Activated T-helper 1 cell treated with anti-CD3 and anti-CD28 coated beads, Interleukin-12 subunit alpha, Interleukin-12 subunit beta, Interleukin-2, Interleukin-4 antibody, amounts not matched to agents 30 ng/mL and 10 ng/mL and 1 ng/mL, durations not matched to agents 14 hours and 24 hours and 36 hours (primary cell): ENCODE measurements at regions of chr2 and their contacts with region 1.

Region 1: GRCh38 chr2:28392297-28393113 is at the start of gene FOSL2:
- DNase-seq: peak; percentile 94
- H3K4me3 Mint-ChIP-seq: peak within 1 kb of the TSS; percentile 87
- H3K27ac Mint-ChIP-seq: peak within 1 kb of the TSS; percentile 99
- H3K4me1 Mint-ChIP-seq: peaks cover 25% of the 10 kb centered on the region
- H3K27me3 Mint-ChIP-seq: no peaks in the 10 kb centered on the region
- total RNA-seq, gene FOSL2: 54.9 and 55.0 TPM in 2 replicates

Region 2: DNA sequence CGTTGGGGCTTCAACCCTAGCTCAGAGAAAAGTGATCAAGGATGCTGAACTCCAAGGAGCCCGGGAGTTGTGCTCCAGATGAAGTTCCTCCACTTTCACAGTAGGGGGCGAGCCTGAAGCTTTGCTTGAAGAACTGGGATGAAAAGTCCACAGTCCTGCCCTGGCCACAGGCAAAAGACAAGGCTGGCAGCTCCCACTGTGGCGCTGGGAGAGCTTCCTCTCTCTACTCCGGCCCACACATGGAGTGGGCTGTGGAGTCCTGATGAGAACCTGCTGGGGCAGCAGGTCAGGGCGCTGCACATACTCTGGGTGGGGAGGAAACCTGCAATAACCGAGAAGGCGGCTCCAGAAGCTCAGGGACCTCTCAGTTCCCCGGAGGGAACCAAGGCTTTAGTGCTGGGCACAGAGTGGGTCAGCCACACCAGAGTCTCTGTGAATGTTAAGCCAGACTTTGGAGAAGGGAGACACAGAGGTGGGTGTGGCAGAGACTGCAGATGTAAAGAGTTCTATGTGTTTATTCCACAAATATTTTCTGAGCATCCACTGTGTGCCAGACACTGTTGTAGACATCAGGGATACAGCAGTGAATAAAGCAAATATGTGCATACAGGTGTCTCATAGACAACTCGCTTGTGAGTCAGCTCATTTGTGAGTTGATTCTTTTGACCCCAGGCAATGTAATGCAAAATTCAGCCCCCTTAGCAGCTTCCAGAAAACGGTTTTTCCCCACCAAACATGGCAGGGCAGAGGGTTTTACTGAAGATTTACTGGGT is 668.9 kb before region 1 on chr2:
- intact Hi-C with region 1: loop called (anchors 5 kb)
- DNase-seq: no peak
- H3K4me3 Mint-ChIP-seq: no peak overlapping the region
- H3K27ac Mint-ChIP-seq: no peak overlapping the region
- H3K4me1 Mint-ChIP-seq: peaks cover 40% of the 10 kb centered on the region
- H3K27me3 Mint-ChIP-seq: peaks cover 3% of the 10 kb centered on the region

Region 3: DNA sequence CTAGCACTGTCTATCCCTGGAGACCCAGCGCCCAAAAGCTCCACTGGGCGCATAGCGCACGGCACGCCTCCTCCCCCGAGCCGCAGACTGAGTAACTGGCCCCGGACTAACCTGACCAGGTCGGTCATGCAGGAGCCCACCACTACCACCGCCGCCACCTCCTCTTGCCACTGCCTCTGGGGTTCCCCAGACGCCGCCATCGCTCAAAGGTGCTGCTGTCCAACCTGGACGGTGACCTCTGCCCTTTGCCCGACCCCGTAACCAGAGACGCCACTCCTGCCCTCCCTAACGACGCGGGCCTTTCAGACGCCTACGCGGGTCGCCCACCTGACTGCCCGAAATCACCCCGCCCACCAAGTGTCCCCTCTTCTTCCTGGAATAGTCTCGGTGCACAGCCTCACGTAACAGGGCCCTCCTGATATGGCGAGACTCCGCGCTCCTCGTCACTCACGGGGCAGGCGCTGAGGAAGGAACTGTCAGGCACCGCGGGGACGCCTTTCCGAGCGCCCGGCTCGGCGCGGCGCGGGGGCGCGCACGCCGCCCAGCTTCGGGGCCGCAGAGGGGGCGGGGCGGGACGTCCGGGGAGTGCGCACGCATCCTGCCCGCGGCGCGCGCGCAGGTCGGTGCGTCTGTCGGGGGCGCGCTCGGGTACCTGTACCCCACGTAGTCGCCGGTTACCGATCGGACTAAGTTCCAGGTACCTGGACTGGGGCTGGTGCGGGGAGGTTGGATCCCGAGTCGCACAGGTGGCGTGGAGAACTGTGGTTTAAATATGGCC is 502.2 kb before region 1 on chr2 and contains the starts of genes BABAM2 and RBKS:
- intact Hi-C with region 1: loop called (anchors 1 kb)
- DNase-seq: peak; percentile 88
- H3K4me3 Mint-ChIP-seq: peak within 1 kb of the TSS; percentile 93
- H3K27ac Mint-ChIP-seq: peak within 1 kb of the TSS; percentile 99
- H3K4me1 Mint-ChIP-seq: peaks cover 62% of the 10 kb centered on the region
- H3K27me3 Mint-ChIP-seq: no peaks in the 10 kb centered on the region
- total RNA-seq, gene BABAM2: 46.3 and 46.6 TPM in 2 replicates
- total RNA-seq, gene RBKS: 0.76 and 0.83 TPM in 2 replicates

Region 4: GRCh38 chr2:28206762-28207161 is 185.7 kb before region 1 on chr2:
- intact Hi-C with region 1: no loop called
- DNase-seq: no peak
- H3K4me3 Mint-ChIP-seq: no peak overlapping the region
- H3K27ac Mint-ChIP-seq: no peak overlapping the region
- H3K4me1 Mint-ChIP-seq: peaks cover 5% of the 10 kb centered on the region
- H3K27me3 Mint-ChIP-seq: peaks cover 2% of the 10 kb centered on the region

Region 5: DNA sequence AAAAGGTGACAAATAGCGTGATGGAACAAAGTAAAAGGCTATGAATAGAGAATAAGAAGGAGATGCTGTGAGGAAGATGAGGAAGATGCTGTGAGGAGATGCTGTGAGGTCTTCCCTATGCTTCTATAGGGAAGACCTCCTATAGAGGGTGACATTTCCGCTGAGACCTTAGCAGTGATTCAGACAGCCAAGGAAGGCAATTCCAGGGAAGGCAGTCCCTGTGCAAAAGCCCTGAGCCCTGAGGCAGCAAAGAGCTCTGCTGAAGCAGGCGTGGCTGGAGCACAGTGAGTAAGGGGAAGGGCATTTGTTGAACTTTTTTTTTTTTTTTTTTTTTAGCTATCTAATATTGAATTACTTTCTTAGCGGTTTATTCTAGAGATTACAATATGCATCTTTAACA is 142.5 kb before region 1 on chr2:
- intact Hi-C with region 1: loop called (anchors 1 kb)
- DNase-seq: no peak
- H3K4me3 Mint-ChIP-seq: no peak overlapping the region
- H3K27ac Mint-ChIP-seq: no peak overlapping the region
- H3K4me1 Mint-ChIP-seq: peaks cover 64% of the 10 kb centered on the region
- H3K27me3 Mint-ChIP-seq: no peaks in the 10 kb centered on the region

Region 6: DNA sequence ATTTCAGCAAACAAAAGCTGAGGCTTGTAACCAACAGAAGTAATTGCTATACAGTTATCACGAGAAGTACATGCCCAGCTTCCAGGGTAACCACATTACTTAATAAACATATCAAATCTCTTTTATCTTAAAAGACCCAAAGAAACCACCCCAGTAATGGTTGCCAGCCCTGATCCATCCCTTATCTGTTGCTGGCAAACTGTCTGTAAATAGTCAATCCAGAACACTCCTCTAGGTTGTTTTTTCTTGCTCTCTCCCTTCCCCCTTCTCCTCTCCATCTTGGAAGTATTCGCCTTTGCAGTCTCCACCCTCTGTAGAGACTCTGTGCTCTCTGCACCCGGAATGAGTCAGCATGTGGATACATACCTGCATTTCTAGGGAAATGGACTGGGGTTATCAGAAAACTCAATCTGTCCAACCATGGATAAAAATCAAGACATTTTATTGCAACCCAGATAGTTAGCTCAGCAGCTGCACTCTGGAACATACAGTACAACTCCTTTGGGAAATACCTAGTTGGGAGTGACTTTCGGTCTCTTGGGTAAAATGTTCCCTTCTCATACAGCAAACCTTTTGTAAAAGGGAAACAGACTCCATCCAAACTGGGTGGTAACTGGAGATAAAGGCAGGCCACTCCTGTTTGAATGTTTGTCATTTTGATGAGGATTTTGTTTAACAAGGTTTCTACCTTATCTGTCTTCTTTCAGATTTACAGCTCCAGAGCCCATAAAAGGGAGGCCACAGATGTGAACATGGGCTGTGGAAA is 123.3 kb before region 1 on chr2:
- intact Hi-C with region 1: no loop called
- DNase-seq: no peak
- H3K4me3 Mint-ChIP-seq: no peak overlapping the region
- H3K27ac Mint-ChIP-seq: no peak overlapping the region
- H3K4me1 Mint-ChIP-seq: peaks cover 37% of the 10 kb centered on the region
- H3K27me3 Mint-ChIP-seq: no peaks in the 10 kb centered on the region

Region 7: GRCh38 chr2:28413142-28413898 is 20.8 kb after region 1 on chr2:
- intact Hi-C with region 1: loop called (anchors 1 kb)
- DNase-seq: no peak
- H3K4me3 Mint-ChIP-seq: no peak overlapping the region
- H3K27ac Mint-ChIP-seq: no peak overlapping the region
- H3K4me1 Mint-ChIP-seq: peaks cover 44% of the 10 kb centered on the region
- H3K27me3 Mint-ChIP-seq: no peaks in the 10 kb centered on the region

Region 8: DNA sequence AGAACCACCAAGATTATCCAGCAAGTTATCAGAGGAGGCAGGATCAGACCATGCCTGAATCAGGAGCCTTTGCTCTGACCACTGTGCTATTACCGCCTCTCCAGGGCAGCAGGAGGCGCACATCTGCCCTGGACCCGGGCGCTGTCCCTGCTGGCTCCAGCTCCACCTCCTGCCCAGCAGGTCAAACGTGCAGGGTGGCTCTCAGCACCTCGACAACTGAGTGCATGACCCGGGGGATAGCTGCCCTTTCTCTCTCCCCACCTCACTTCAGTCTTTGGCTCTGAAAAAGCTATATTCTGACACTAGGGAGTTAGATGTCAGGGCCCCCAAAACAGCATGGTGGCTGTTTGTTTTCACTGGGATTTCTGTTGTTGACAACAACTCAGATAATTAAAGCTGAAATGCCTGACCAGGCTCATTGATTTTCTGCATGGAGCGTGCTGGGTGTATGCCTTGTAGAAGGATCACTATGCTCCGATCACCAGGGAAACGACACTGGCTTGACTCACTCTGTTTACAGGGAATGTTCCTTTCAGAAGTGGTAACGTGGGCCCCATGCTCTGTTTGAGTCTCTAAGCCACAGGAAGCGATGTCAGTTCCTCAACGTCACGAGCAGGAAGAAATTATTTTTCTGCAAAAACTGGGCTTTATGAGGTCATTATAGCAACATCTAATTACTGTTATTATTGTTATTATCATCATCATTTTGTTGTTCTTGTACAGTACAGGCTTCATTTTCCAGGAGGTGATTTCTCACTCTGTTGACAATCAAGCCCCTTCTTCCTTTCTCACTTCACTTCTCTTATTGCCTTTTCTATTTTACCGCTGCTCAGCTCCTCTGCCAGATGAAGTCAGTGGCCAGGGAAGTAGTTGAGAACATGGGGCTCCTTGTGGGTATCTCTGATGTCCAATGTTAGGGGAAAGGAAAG is 228.9 kb after region 1 on chr2:
- intact Hi-C with region 1: loop called (anchors 5 kb)
- DNase-seq: peak; percentile 77
- H3K4me3 Mint-ChIP-seq: peak overlapping the region; percentile 67
- H3K27ac Mint-ChIP-seq: peak overlapping the region; percentile 96
- H3K4me1 Mint-ChIP-seq: peaks cover 5% of the 10 kb centered on the region
- H3K27me3 Mint-ChIP-seq: no peaks in the 10 kb centered on the region